ENCODE measurements at regions of chr12 and their contacts with region 1.

Region 1: DNA sequence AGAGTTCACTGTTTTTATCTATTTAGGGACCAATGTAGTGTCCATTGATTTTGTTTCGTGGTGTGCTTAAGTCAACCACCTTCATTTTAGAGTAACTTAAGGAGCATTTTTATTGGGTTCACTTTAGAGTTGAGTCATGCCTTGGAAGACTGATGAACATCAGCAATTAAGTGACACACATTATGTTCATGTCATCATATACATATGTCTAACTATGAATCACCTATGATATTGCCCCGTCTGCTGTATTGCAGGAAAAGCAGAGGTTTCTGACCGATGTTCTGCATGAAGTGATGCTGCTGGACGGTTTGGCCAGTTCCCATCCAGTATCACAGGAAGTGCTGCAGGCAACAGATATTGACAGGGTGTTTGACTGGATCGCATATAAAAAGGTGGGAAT is 227.1 kb downstream of the TRHDE start:
- DNase-seq: peak; percentile 85
- ATAC-seq: peak; percentile 93
- H3K4me3 ChIP-seq: no peak overlapping the region
- H3K27ac ChIP-seq: peak overlapping the region; percentile 36
- H3K4me1 ChIP-seq: peaks cover 24% of the 10 kb centered on the region
- H3K27me3 ChIP-seq: no peaks in the 10 kb centered on the region
- CTCF ChIP-seq: no peak

Region 2: DNA sequence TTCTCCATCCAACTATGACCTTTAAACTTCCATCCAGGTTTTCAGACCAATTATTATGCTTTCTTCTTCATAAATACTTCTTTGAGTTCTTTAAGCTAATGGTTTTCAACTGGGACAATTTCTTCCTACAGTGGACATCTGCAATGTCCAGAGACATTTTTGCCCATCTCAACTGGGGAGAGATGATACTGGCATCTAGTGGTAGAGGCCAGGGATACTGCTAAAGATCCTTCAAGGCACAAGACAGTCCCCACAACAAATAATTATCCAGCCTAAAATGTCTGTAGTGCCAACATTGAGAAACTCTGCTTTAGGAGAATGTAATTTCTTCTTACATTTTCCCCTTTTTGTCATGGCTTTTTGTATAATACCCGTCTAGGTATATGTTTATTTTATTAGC is 216.5 kb before region 1 on chr12:
- CTCF ChIA-PET with region 1: no interaction called
- POLR2A ChIA-PET with region 1: no interaction called
- intact Hi-C with region 1: no loop called
- DNase-seq: peak; percentile 66
- ATAC-seq: peak; percentile 76
- H3K4me3 ChIP-seq: no peak overlapping the region
- H3K27ac ChIP-seq: no peak overlapping the region
- H3K4me1 ChIP-seq: peaks cover 47% of the 10 kb centered on the region
- H3K27me3 ChIP-seq: no peaks in the 10 kb centered on the region
- CTCF ChIP-seq: peak; percentile 86

Region 3: DNA sequence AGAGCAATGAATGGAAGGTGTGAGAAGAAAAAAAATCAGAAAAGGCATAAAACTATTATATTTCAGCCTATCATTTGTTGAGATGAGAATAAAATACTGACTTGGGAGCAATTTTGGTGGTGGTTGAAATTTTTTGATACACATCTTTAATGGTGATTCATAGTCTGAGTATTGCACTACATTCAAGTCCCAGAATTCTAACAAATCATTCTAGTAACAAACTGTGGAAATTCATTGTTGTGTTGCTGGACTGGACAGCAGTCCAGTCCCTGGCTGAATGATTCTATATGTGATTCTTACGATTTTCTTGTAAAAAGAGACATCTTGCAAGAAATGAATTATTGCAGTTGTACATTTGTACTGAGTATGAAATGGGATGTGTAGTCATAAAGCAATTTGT is 41.6 kb after region 1 on chr12:
- CTCF ChIA-PET with region 1: no interaction called
- POLR2A ChIA-PET with region 1: no interaction called
- intact Hi-C with region 1: loop called (anchors 5 kb)
- DNase-seq: peak; percentile 6
- ATAC-seq: peak; percentile 21; the same call in 1 of the 2 replicates
- H3K4me3 ChIP-seq: no peak overlapping the region
- H3K27ac ChIP-seq: no peak overlapping the region
- H3K4me1 ChIP-seq: peaks cover 16% of the 10 kb centered on the region
- H3K27me3 ChIP-seq: no peaks in the 10 kb centered on the region
- CTCF ChIP-seq: no peak

Measured in PC-3 (cell line).